Heart right ventricle (tissue), 16 donors: ENCODE measurements at regions of chr10 and their contacts with region 1.

Region 1: DNA sequence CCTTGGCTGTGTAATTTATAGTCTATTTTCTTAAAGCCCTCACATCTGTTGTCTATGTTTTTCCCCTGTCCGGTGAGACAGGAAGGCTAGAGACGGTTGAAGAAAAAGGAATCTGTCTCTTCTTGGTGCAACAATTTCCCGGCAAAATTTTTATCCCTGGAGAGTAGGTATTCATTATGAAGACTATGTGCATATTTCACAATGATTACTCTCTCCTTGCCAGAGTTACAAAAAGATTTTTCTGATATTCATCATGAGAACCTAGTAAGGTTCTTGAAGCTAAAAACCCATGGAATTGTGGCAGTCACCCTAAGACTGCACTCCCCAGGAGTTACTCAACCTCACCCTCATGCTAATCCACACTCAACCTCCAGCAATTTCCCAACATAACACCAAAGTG is 55.0 kb upstream of the GHITM start:
- DNase-seq: no peak
- ATAC-seq: peak in 1 of 8 donors; percentile 69
- H3K4me3 ChIP-seq: no peak overlapping the region
- H3K27ac ChIP-seq: peak overlapping the region in 1 of 10 donors; percentile 35
- H3K4me1 ChIP-seq: peaks cover 0 to 7% (median 0%) of the 10 kb centered on the region in 9 donors
- H3K27me3 ChIP-seq: no peaks in the 10 kb centered on the region
- CTCF ChIP-seq: no peak

Region 2: DNA sequence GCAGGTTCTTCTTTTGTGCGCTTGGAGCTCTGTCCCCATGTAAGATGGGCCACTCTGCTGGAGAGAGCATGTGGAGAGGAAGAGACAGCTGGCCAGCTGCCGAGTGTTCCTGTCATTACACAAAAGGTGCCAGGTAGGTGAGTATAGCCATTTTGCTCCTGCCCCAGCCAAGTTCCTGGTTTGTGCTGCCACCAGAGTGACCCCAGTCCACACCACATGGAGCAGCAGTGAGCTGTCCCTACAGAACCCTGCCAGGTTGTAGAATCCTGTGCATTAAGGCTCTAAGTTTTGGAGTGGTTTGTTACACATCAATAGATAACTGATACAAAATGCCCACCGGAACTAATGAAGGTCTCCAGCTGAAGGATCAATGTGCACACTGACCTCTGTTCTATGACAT is 29.6 kb before region 1 on chr10:
- intact Hi-C with region 1: no loop called
- DNase-seq: no peak
- ATAC-seq: no peak
- H3K4me3 ChIP-seq: no peak overlapping the region
- H3K27ac ChIP-seq: no peak overlapping the region
- H3K4me1 ChIP-seq: no peaks in the 10 kb centered on the region
- H3K27me3 ChIP-seq: peaks cover 0 to 3% (median 0%) of the 10 kb centered on the region in 7 donors
- CTCF ChIP-seq: no peak

Region 3: GRCh38 chr10:85621562-85621961 is 1537.2 kb after region 1 on chr10:
- intact Hi-C with region 1: loop called in 1 of 10 experiments (anchors 5 kb)
- DNase-seq: no peak
- ATAC-seq: no peak
- H3K4me3 ChIP-seq: no peak overlapping the region
- H3K27ac ChIP-seq: no peak overlapping the region
- H3K4me1 ChIP-seq: no peaks in the 10 kb centered on the region
- H3K27me3 ChIP-seq: no peaks in the 10 kb centered on the region
- CTCF ChIP-seq: no peak